Left cardiac atrium (tissue), 4 donors: ENCODE measurements at regions of chr18 and their contacts with region 1.

Region 1: GRCh38 chr18:58314284-58314683 is 270.3 kb downstream of the NEDD4L start:
- DNase-seq: peak; percentile 64
- ATAC-seq: peak; percentile 84 to 88

Region 2: DNA sequence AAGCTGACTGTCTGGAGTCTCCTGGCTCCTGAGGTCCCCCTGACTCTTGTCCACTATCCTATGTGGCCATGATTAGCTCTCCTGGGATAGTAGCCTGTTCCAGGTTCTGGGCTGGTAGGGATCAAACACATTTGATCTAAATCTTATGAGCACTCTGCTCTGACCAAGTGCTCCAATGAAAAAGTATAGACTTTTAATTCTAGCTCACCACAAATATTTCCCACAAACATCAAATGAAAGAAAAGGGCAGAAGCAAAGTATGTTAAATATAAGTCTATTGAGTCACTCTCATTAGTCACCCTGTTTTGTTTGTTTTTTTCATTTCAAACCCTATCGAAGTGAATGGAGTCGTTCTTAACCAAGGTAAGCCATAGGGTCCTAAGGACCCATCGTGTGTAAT is 310.0 kb before region 1 on chr18:
- intact Hi-C with region 1: no loop called
- DNase-seq: no peak
- ATAC-seq: no peak

Region 3: DNA sequence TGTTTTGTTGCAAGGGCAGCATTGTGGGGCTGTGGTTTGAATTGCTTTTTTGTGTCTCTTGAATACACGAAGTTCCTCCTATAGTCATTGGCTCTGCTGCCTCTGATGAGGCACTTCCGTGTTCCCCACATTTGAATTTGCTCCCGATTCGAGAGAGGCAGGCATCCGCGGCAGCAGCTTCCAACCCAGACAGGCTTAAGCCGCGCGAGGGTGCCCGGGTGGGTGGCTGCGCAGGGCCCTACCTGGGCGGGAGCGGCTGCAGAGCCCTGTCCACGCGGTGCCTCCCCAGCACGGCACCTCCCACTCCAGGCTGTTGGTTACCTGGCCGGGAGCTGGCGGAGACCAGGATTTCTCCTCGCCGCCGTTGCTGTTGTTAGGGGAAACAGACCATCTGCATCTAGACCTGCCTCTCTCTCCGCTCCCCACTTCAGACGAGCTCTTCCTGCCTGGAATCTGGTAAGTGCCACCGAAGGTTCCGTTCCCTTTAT is 119.0 kb before region 1 on chr18:
- intact Hi-C with region 1: loop called in 1 of 2 experiments (anchors 5 kb)
- DNase-seq: no peak
- ATAC-seq: peak; percentile 36 to 79

Region 4: GRCh38 chr18:58213440-58213839 is 100.8 kb before region 1 on chr18:
- intact Hi-C with region 1: no loop called
- DNase-seq: no peak
- ATAC-seq: no peak

Region 5: GRCh38 chr18:58257461-58257860 is 56.8 kb before region 1 on chr18:
- intact Hi-C with region 1: loop called (anchors 5 to 10 kb)
- DNase-seq: no peak
- ATAC-seq: no peak

Region 6: GRCh38 chr18:58263055-58263957 is 51.0 kb before region 1 on chr18:
- intact Hi-C with region 1: loop called (anchors 5 to 10 kb)
- DNase-seq: no peak
- ATAC-seq: peak; percentile 34 to 46